Gastrocnemius medialis (tissue), 4 donors: ENCODE measurements at regions of chr15 and their contacts with region 1.

Region 1: GRCh38 chr15:39624806-39625205 is 43.9 kb downstream of the THBS1 start:
- DNase-seq: peak; percentile 17 to 76
- ATAC-seq: peak; percentile 86 to 91
- H3K4me3 ChIP-seq: no peak overlapping the region
- H3K27ac ChIP-seq: peak overlapping the region; percentile 57 to 81 (median 74)
- H3K4me1 ChIP-seq: peaks cover 26 to 37% of the 10 kb centered on the region in 2 donors
- H3K27me3 ChIP-seq: no peaks in the 10 kb centered on the region
- CTCF ChIP-seq: no peak
- POLR2A ChIP-seq: peak in 1 of 2 donors; percentile 17

Region 2: DNA sequence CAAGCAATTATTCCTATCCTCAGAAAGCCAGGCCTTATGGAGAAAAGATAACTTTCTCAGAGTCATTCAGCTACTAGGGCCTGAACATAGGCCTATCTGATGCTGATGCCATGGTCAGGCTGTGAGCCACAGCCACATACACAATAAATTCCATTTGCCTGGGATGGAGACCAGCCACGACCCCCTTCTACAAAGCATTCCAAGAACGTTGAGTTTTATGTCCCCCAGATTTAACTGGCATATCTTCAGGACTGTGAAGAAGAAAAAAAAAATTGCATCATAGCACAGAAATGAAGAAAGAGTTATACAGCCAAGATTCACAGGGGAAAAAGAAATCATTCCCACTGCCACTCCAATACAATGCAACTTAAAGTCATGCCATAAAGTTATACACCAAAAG is 56.1 kb after region 1 on chr15:
- in situ Hi-C with region 1: no loop called
- intact Hi-C with region 1: loop called (anchors 5 kb)
- DNase-seq: no peak
- ATAC-seq: no peak
- H3K4me3 ChIP-seq: no peak overlapping the region
- H3K27ac ChIP-seq: no peak overlapping the region
- H3K4me1 ChIP-seq: no peaks in the 10 kb centered on the region
- H3K27me3 ChIP-seq: no peaks in the 10 kb centered on the region
- CTCF ChIP-seq: no peak
- POLR2A ChIP-seq: no peak